ENCODE measurements at regions of chr3 and their contacts with region 1.

Region 1: DNA sequence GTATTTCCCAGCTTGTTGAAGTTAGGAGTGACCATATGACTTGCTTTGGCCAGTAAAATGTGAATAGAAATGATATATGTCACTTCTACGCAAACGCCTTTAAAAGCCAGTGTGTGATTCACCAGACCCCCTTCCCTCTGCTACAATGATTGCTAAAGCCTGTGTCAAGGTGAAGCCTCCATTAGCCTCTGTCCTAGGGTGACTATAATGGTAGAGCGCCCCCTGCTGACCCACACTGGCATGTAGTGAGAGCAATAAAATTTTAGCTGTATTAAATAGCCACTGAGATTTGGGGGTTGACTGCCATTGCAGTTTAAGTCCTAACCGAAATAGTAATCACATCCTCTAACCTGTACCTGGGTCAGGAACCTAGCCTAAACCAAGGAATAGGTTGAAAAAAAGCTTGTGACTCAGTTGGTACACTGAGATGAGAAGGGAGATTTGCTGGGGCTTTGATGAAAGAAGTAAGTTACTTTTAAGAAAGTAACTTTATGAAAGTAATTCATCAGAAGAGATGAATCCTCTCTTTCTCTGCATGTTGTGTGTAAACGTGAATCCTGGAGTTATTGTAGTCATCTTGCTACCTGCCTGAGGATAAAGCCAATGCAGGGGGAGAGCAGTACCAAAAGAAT is 52.6 kb downstream of the GTF2E1 start:
- DNase-seq: peak; percentile 6
- H3K4me3 ChIP-seq: no peak overlapping the region
- H3K27ac ChIP-seq: no peak overlapping the region
- H3K4me1 ChIP-seq: no peaks in the 10 kb centered on the region
- H3K27me3 ChIP-seq: no peaks in the 10 kb centered on the region
- CTCF ChIP-seq: peak; percentile 59 to 88 (median 80)
- POLR2A ChIP-seq: no peak

Region 2: DNA sequence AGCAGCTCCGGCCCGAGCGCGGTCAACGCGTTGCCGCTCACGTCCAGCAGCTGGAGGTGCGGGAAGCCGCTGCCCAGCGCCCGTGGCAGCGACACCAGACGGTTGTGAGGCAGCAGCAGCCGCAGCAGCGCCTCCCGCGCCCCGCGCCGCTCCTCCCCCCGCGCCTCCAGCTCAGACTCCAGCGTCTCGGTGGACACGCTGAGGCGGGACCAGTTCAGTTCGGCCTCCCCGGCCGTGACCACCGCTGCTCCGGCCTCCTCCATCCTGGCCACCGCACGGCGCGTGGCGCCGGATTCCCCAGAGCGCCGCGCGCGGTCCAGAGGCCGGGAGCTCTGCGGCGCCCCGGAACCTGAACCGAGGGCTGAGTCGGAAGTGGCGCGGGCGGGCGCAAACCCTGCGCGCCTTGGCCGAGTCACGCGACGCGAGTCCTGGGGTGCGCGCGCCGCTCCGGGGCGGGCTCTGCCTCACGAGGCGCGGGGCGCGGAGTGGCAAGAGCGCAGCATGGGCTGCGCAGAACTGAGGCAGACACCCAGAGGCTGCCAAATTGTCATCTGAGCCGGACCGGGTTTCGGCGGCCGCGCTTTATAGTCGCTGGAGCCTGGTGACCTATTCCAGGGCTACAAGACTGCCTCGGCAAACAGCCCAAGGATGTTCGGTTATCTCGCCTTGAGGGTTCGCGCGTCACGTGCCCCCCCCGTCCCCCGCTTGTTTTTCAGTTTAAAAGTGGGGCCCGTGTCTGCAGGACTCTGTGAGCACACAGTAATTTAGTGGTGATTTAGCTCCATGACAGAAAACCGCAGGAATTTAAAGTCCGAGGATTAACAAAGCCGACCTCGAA is 445.9 kb before region 1 on chr3 and contains the start of gene LRRC58:
- intact Hi-C with region 1: loop called (anchors 5 kb)
- DNase-seq: peak; percentile 61
- H3K4me3 ChIP-seq: peak within 1 kb of the TSS; percentile 64 to 97 (median 84)
- H3K27ac ChIP-seq: peak within 1 kb of the TSS; percentile 83 to 95 (median 90)
- H3K4me1 ChIP-seq: peaks cover 8 to 61% (median 9%) of the 10 kb centered on the region in 3 donors
- H3K27me3 ChIP-seq: no peaks in the 10 kb centered on the region
- CTCF ChIP-seq: peak in 4 of 6 experiments; percentile 2 to 36 (median 14)
- POLR2A ChIP-seq: peak in 3 of 4 donors; percentile 72 to 95 (median 85)
- total RNA-seq, gene LRRC58: 11.6 to 27.8 (median 24.5) TPM

Region 3: DNA sequence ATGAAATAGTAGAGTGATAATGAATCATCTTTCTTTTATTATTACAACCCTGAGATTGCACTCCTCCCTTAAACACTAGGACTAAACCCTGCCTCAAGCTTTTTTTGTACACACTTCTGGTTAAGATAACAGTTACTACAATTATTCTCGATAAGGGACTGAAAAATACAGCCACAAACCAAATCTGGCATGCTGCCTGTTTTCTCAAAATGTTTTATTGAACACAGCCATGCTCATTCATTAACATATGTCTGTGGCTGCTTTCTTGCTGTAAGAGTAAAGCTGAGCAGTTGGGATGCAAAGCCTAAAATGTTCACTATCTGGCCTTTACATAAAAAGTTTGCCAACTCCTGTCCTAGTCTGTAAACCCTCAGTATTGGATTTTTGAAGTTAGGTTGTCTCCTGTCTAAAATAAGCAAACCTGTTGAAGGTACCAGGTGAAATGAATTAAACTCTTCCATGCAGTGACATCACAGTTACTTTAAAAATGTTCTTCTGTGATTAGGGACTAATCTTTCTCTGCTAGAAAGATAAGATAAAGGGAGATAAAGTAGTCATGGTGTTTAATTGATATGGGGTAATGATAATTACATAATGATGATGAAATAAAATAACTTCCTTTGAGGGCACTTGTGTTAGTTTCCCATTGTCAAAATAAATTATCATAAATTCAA is 331.0 kb after region 1 on chr3:
- intact Hi-C with region 1: no loop called
- DNase-seq: no peak
- H3K4me3 ChIP-seq: no peak overlapping the region
- H3K27ac ChIP-seq: no peak overlapping the region
- H3K4me1 ChIP-seq: no peaks in the 10 kb centered on the region
- H3K27me3 ChIP-seq: no peaks in the 10 kb centered on the region
- CTCF ChIP-seq: no peak
- POLR2A ChIP-seq: no peak

Measured in esophagus squamous epithelium (tissue), 5 donors.